Dorsolateral prefrontal cortex (tissue), 120 donors: ENCODE measurements at regions of chr4 and their contacts with region 1.

Region 1: GRCh38 chr4:138090150-138090917 is 151.8 kb downstream of the SLC7A11 start:
- DNase-seq: peak in 5 of 10 donors; percentile 16 to 42 (median 38)
- H3K4me3 ChIP-seq: peak overlapping the region in 42 of 59 donors; percentile 4 to 55 (median 36)
- H3K27ac ChIP-seq: no peak overlapping the region
- H3K27me3 ChIP-seq: no peaks in the 10 kb centered on the region
- CTCF ChIP-seq: peak; percentile 72 to 97 (median 86)

Region 2: DNA sequence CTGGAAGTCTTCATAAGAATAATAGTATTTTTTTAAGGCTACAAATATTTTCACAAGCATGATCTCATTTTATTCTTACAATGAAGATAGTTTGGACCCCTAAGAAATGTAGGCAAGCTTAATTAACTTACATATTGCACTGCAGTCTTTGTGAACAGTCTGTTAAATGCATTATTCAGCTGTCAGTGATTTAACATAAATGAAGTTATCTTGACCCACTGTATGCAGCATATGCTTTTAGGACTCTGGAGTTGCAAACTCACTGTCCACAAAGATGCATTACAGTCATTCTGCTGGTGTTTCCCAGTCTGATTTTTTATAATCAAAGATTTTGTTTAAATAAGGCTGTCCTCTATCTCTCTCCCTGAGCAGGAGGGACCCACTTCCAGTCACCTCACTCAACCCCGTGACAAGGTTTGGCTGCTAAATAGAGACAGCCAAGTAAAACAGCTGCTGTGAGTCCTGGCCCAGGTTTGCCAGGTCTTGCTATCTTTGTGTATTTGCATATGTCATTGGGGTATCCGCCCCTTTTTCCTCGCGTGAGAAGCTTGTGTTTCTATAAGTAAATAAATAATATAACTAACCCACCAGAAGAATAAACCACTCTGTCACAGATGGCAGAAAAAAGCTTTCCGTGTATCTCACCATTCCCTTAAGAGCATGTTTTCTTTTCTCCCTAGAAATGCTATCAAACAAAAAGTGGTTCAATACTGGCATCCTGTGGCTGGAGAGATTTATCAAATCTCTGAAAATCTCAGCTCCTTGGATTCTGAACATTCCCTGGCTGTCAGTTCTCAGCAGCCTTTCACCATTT is 84.9 kb after region 1 on chr4:
- intact Hi-C with region 1: loop called in 1 of 2 experiments (anchors 10 kb)
- DNase-seq: no peak
- H3K4me3 ChIP-seq: peak overlapping the region in 4 of 59 donors; percentile 11 to 20 (median 12)
- H3K27ac ChIP-seq: peak overlapping the region in 14 of 59 donors; percentile 1 to 66 (median 40)
- H3K27me3 ChIP-seq: no peaks in the 10 kb centered on the region
- CTCF ChIP-seq: peak in 40 of 56 donors; percentile 9 to 52 (median 29)

Region 3: GRCh38 chr4:138188406-138189084 is 98.2 kb after region 1 on chr4:
- intact Hi-C with region 1: no loop called
- DNase-seq: no peak
- H3K4me3 ChIP-seq: no peak overlapping the region
- H3K27ac ChIP-seq: peak overlapping the region in 1 of 59 donors; percentile 17
- H3K27me3 ChIP-seq: no peaks in the 10 kb centered on the region
- CTCF ChIP-seq: no peak